Activated T-helper 1 cell treated with anti-CD3 and anti-CD28 coated beads, Interleukin-12 subunit alpha, Interleukin-12 subunit beta, Interleukin-2, Interleukin-4 antibody, amounts not matched to agents 30 ng/mL and 10 ng/mL and 1 ng/mL, durations not matched to agents 14 hours and 24 hours and 36 hours (primary cell): ENCODE measurements at regions of chr3 and their contacts with region 1.

Region 1: DNA sequence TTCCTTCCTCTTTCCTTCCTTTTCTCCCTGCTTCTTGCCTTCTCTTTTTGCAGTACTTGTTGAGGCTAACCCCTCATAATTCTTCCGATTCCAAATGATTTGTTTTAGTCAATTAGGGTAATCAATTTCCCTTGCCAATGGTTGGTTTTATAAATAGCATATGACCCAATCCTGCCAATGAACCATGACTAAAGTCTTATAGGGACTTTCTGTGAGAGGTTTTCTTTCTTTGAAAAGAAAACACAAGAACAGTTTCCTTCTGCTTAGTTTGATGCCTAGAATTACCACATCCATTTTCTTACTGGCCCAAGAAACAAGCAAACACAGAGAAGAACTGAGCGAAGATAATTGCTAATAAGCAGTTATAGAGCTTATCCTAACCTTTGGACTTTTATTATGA is 292.5 kb upstream of the SATB1 start:
- DNase-seq: no peak
- H3K4me3 Mint-ChIP-seq: peak overlapping the region; percentile 64
- H3K27ac Mint-ChIP-seq: peak overlapping the region; percentile 98
- H3K4me1 Mint-ChIP-seq: peaks cover 67% of the 10 kb centered on the region
- H3K27me3 Mint-ChIP-seq: no peaks in the 10 kb centered on the region

Region 2: GRCh38 chr3:18501679-18502343 is 215.8 kb before region 1 on chr3:
- intact Hi-C with region 1: loop called (anchors 2 kb)
- DNase-seq: no peak
- H3K4me3 Mint-ChIP-seq: no peak overlapping the region
- H3K27ac Mint-ChIP-seq: peak overlapping the region; percentile 62
- H3K4me1 Mint-ChIP-seq: peaks cover 47% of the 10 kb centered on the region
- H3K27me3 Mint-ChIP-seq: no peaks in the 10 kb centered on the region

Region 3: GRCh38 chr3:18618723-18619122 is 98.9 kb before region 1 on chr3:
- intact Hi-C with region 1: no loop called
- DNase-seq: no peak
- H3K4me3 Mint-ChIP-seq: no peak overlapping the region
- H3K27ac Mint-ChIP-seq: no peak overlapping the region
- H3K4me1 Mint-ChIP-seq: peaks cover 7% of the 10 kb centered on the region
- H3K27me3 Mint-ChIP-seq: no peaks in the 10 kb centered on the region

Region 4: GRCh38 chr3:18649666-18650363 is 67.8 kb before region 1 on chr3:
- intact Hi-C with region 1: loop called (anchors 1 kb)
- DNase-seq: peak; percentile 70
- H3K4me3 Mint-ChIP-seq: peak overlapping the region; percentile 59
- H3K27ac Mint-ChIP-seq: peak overlapping the region; percentile 94
- H3K4me1 Mint-ChIP-seq: peaks cover 94% of the 10 kb centered on the region
- H3K27me3 Mint-ChIP-seq: no peaks in the 10 kb centered on the region

Region 5: DNA sequence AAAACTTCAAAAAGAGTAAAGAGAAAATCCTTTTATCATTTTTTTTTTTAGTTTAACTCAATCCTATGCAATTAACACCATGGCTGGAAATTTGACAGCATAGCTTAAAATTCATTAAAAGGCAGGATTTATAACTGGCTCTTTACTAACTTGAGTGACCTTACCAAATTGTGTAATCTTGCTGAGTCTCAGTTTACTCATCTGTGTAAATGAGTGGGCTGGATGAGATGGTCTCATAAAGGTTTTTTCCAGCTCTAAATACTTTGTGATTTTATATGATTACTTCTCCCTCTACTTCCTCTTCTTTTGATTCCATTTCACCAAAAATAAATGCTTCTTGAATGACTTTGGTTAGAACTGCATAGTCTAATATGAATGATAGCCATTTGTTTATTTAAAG is 57.5 kb before region 1 on chr3:
- intact Hi-C with region 1: loop called (anchors 1 kb)
- DNase-seq: no peak
- H3K4me3 Mint-ChIP-seq: no peak overlapping the region
- H3K27ac Mint-ChIP-seq: peak overlapping the region; percentile 4
- H3K4me1 Mint-ChIP-seq: peaks cover 79% of the 10 kb centered on the region
- H3K27me3 Mint-ChIP-seq: no peaks in the 10 kb centered on the region

Region 6: GRCh38 chr3:18679238-18679637 is 38.4 kb before region 1 on chr3:
- intact Hi-C with region 1: loop called (anchors 1 kb)
- DNase-seq: peak; percentile 62
- H3K4me3 Mint-ChIP-seq: peak overlapping the region; percentile 19
- H3K27ac Mint-ChIP-seq: peak overlapping the region; percentile 77
- H3K4me1 Mint-ChIP-seq: peaks cover 89% of the 10 kb centered on the region
- H3K27me3 Mint-ChIP-seq: no peaks in the 10 kb centered on the region

Region 7: DNA sequence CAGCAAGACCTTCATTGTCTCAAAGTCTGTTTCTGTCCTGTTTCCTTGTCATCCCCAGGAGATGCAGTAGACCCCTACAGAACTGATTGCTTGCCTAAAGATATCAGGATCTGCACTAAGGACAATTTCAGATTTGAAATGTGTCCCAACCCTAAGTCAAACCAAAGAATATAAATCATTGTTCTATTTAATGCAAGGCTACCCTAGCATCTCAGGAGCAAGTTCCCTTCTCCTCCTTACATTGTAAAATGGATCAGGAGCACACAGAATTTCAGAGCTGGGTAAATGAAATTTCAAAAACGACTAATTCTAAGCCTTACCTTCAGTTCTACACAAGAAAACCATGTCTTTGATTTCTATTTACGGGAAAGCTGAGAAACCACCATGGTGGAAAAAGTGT is 69.8 kb after region 1 on chr3:
- intact Hi-C with region 1: loop called (anchors 2 kb)
- DNase-seq: no peak
- H3K4me3 Mint-ChIP-seq: no peak overlapping the region
- H3K27ac Mint-ChIP-seq: no peak overlapping the region
- H3K4me1 Mint-ChIP-seq: peaks cover 8% of the 10 kb centered on the region
- H3K27me3 Mint-ChIP-seq: peaks cover 3% of the 10 kb centered on the region